WTC11 (cell line): ENCODE measurements at regions of chr11 and their contacts with region 1.

Region 1: GRCh38 chr11:134223836-134224709 is at the starts of genes NCAPD3 and VPS26B:
- DNase-seq: peak; percentile 97
- ATAC-seq: peak; percentile 89
- H3K4me3 Mint-ChIP-seq: peak within 1 kb of the TSS; percentile 93
- H3K27ac Mint-ChIP-seq: peak within 1 kb of the TSS; percentile 74
- H3K4me1 Mint-ChIP-seq: peaks cover 27% of the 10 kb centered on the region
- H3K27me3 Mint-ChIP-seq: peaks cover 8% of the 10 kb centered on the region
- CTCF ChIP-seq: no peak
- total RNA-seq, gene NCAPD3: 46.5 to 63.0 TPM (median 49.1 TPM) in 3 replicates
- total RNA-seq, gene VPS26B: 28.7 to 29.3 TPM (median 29.0 TPM) in 3 replicates

Region 2: DNA sequence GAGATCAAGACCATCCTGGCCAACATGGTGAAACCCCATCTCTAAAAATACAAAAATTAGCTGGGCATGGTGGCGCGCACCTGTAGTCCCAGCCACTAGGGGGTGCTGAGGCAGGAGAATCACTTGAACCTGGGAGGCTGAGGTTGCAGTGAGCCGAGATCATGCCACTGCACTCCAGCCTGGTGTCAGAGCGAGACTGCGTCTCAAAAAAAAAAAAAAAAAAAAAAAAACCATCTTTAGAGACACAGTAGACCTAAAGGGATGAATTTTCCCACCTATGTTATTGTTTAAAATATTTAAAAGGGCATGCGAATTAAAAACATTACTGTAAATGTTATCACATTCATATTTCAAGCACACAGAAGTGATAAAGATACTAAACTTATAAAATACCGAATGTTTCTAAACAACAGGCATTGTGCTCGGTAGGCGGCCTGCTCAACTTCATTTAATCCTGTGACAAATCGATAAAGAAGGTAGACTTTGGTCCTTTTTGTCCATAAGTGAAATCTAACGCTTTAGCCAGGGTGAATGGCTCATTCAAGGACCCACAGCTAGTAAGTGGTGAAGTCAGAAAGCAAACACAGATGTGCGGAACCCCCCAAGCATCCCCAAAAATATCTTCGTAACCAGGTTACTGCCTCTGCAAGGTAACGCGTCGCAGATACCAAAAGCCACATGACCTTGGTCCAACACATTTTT is 16.4 kb before region 1 on chr11:
- CTCF ChIA-PET with region 1: interaction called, 14 read pairs
- POLR2A ChIA-PET with region 1: no interaction called
- DNase-seq: peak; percentile 65
- ATAC-seq: no peak
- H3K4me3 Mint-ChIP-seq: no peak overlapping the region
- H3K27ac Mint-ChIP-seq: no peak overlapping the region
- H3K4me1 Mint-ChIP-seq: no peaks in the 10 kb centered on the region
- H3K27me3 Mint-ChIP-seq: no peaks in the 10 kb centered on the region
- CTCF ChIP-seq: peak; percentile 72

Region 3: DNA sequence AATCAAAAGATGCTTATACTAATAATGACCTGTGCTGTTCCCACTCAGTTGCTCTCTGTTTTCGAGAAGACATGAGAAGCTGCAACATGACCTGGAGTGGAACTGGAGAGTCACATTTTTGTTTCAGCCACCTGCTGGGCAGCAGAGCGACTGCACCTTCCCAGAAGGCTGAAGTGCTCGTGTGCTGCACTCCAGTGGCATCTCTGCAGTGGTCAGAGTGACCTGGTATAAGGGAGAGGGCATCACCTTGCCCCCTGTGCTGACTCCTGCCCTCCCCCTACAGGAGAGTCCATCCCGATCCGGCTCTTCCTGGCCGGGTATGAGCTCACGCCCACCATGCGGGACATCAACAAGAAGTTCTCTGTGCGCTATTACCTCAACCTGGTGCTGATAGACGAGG is 20.6 kb after region 1 on chr11:
- CTCF ChIA-PET with region 1: interaction called, 13 read pairs
- POLR2A ChIA-PET with region 1: no interaction called
- DNase-seq: no peak
- ATAC-seq: peak; percentile 83
- H3K4me3 Mint-ChIP-seq: no peak overlapping the region
- H3K27ac Mint-ChIP-seq: no peak overlapping the region
- H3K4me1 Mint-ChIP-seq: peaks cover 8% of the 10 kb centered on the region
- H3K27me3 Mint-ChIP-seq: no peaks in the 10 kb centered on the region
- CTCF ChIP-seq: no peak

Region 4: GRCh38 chr11:134261626-134262488 is 37.8 kb after region 1 on chr11:
- CTCF ChIA-PET with region 1: interaction called, 13 read pairs
- POLR2A ChIA-PET with region 1: no interaction called
- DNase-seq: peak; percentile 58
- ATAC-seq: peak; percentile 90
- H3K4me3 Mint-ChIP-seq: no peak overlapping the region
- H3K27ac Mint-ChIP-seq: no peak overlapping the region
- H3K4me1 Mint-ChIP-seq: peaks cover 22% of the 10 kb centered on the region
- H3K27me3 Mint-ChIP-seq: no peaks in the 10 kb centered on the region
- CTCF ChIP-seq: peak; percentile 33; the same call in 1 of the 2 replicates

Region 5: DNA sequence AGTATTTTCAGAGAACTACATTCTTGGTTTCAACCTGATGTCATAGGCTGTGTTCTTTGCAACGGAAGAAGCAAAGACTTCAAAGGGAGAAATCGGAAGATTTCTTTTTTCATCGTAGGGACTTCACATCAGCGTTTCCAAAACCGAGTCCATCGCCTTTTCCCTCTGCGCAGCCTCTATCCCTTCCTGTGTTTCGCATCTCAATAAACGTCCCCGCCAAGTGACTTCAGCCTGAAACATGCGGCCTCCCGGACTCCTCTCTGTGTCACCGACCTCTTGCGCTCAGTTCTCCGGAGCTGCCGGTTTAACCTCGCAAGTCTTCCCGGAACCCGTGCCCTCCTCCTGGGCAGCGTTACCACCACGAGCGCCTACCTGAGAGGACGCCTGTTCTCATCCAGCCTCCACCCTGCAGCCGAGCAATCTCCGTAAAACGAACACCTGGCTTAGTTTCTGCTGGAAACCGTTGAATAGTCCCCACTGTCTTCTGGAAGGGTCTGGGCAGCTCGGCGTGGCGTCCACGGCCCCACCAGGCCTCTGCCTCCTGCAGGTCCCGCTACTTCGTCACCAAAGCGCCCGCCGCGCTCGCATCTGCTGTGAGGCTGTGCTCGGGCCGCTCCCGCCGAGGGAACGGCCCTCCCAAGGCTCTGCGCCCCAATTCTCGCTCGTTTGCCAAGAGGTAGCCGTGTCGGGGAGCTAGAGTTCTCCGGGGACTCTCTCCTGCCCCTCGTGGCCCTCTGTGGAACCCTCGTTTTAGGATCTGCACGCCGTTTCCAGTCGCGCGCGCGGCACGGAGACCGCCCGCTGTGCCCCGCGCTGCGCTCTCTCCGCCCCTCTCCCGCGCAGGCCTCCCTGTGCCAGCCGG is 51.7 kb after region 1 on chr11 and contains the start of gene GLB1L3:
- CTCF ChIA-PET with region 1: interaction called, 22 read pairs
- POLR2A ChIA-PET with region 1: interaction called, 5 read pairs
- DNase-seq: peak; percentile 71
- ATAC-seq: peak; percentile 20
- H3K4me3 Mint-ChIP-seq: peak within 1 kb of the TSS; percentile 98
- H3K27ac Mint-ChIP-seq: peak within 1 kb of the TSS; percentile 94
- H3K4me1 Mint-ChIP-seq: peaks cover 64% of the 10 kb centered on the region
- H3K27me3 Mint-ChIP-seq: no peaks in the 10 kb centered on the region
- CTCF ChIP-seq: no peak
- total RNA-seq, gene GLB1L3: 34.6 to 50.2 TPM (median 35.9 TPM) in 3 replicates